Posterior cingulate gyrus (tissue), 11 donors: ENCODE measurements at regions of chr11 and their contacts with region 1.

Region 1: GRCh38 chr11:117717485-117718314 is 79.3 kb downstream of the DSCAML1 start:
- DNase-seq: peak; percentile 73 to 97 (median 90)

Region 2: DNA sequence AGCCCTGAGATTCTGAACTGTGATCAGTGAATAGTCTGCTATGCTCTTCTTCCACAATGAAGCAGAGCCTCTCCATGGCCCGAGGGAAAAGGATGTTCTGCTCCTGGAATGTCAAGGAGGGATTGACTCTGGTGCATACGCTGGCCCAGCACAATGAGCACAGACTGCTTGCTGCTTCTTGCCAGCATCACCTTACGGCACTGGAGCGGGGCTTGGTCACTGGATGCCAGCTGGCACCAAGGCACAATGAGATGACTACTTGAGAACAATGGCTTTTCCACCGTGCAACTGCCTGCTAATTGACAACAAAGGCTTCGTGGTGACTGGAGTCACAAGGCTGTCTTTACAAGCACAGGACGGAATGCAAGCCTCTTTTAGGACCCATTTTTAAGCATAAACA is 59.9 kb before region 1 on chr11:
- intact Hi-C with region 1: no loop called
- DNase-seq: peak; percentile 52 to 96 (median 76)

Region 3: DNA sequence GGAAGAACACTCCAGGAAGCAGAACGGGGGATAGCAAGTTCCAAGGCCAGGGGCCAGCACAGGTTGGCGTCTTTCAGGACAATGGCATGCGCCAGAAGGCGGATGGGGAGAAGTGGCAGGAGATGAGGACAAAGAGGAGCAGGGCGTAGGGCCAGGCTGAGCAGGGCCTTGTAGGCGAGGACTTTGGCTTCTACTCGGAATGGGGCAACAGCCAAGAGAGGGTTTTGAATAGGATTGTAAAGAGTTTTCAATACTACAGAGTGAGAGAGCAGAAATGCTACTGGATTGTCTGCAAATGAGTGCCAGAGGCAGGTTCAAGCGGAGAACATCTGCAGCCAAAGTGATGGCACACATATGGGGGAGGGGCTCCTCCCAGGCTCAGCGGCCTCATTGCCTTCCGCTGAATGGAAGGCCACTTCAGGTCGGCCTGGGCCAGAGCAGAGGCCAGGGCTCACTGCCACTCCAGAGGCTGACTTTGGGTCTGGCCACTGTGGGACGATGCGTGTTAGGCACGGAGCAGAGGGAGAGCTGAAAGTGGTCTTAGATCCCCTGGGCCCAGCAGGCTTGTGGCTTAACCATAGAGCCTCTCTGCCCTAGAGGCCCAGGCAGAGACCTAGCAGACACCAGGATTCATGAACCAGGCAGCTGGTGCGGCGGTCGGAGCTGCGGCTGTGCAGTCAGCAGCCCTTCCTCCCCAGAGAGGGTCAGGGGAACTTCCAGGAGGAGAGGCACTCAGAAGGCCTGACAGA is 38.9 kb before region 1 on chr11:
- intact Hi-C with region 1: loop called (anchors 5 kb)
- DNase-seq: peak; percentile 48 to 94 (median 64)